ENCODE measurements at regions of chr2 and their contacts with region 1.

Region 1: DNA sequence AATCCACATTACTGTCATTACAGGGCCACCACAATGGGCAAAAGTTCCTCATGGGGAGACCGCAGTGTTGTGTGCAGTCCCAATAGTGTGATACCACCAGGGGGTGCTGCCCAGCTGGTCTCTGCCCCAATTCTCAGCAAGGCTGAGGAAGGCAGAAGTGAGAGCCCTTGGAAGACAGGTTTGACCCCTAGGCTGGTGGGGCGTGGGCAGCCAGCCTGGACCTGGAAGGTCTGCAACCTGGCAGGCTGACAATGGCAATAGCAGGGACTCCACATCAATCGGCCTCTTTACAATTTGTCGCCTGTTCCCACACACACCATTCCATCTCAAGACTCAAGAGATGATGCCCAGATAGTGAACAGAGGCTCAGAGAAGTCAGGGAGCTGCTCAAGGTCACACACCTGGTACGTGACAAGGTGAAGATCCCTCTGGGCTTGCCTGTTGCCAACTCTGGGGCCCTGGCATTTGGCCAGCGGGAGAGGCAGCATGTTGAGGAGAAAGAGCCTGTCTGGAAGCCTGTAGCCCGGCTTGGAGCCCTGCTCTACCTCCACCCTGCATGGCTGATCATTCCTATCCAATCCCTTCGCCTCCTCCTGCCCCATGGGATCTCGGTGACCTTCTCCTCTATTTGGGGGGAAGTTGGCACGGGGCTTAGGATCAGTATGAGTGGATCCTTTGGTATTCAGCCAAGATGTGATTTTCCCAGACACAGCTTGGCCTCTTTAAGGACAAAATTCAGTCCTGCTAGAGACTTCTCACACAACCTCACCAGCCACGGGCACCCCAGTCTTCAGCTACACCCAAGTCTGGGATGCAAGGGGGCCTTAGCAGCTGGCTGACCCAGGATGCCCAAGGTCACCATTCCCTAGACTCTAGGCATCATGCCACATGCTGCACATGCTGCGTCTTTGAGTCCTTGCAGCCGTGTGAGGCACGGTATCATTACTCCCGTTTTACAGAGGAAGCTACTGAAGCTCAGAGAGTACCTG is 2.9 kb upstream of the ATOH8 start:
- DNase-seq: peak; percentile 72
- ATAC-seq: peak; percentile 52
- H3K4me3 Mint-ChIP-seq: no peak overlapping the region
- H3K27ac Mint-ChIP-seq: no peak overlapping the region
- H3K4me1 Mint-ChIP-seq: peaks cover 15% of the 10 kb centered on the region
- H3K27me3 Mint-ChIP-seq: peaks cover 69% of the 10 kb centered on the region

Region 2: GRCh38 chr2:85694052-85695025 is 56.5 kb before region 1 on chr2 and contains the start of gene GNLY:
- CTCF ChIA-PET with region 1: no interaction called
- POLR2A ChIA-PET with region 1: no interaction called
- DNase-seq: no peak
- ATAC-seq: peak; percentile 23
- H3K4me3 Mint-ChIP-seq: peak within 1 kb of the TSS; percentile 50
- H3K27ac Mint-ChIP-seq: peak within 1 kb of the TSS; percentile 75
- H3K4me1 Mint-ChIP-seq: peaks cover 48% of the 10 kb centered on the region
- H3K27me3 Mint-ChIP-seq: peaks cover under 1% of the 10 kb centered on the region
- total RNA-seq, gene GNLY: 136 to 143 TPM

Region 3: DNA sequence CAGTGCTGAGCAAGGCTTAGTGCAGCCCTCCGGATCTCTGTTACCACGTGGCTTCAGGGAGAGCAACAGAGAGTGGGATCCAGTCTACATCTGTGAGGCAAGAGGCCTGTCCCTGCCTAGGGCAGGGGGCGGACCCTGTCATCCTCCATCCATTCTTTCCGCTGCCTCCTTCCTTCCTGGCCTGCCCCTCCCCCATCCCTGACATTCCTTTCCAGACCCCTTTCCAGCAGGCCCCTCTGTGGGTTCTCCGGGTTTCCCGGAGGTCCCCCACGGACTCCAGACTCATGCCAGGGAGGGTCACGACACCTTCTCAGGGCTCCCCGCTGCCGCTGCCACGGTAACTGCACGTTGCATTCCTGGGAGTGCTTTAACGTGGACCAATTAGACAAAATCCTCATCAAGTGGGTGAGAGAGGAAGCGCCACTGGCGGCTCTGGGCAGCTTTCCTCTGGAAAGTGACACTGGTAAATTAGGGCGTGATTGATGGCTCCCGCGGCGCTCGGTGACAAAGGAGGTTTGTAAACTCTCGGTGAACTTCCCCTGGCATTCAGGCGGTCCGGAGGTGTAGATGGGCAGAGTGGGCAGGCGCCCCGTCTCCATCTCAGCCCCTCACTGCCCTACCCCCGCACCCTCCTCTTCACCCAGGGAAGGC is 14.3 kb after region 1 on chr2:
- CTCF ChIA-PET with region 1: interaction called, 33 read pairs
- POLR2A ChIA-PET with region 1: no interaction called
- DNase-seq: no peak
- ATAC-seq: no peak
- H3K4me3 Mint-ChIP-seq: no peak overlapping the region
- H3K27ac Mint-ChIP-seq: no peak overlapping the region
- H3K4me1 Mint-ChIP-seq: no peaks in the 10 kb centered on the region
- H3K27me3 Mint-ChIP-seq: peaks cover 41% of the 10 kb centered on the region

Region 4: GRCh38 chr2:85772019-85772745 is 21.3 kb after region 1 on chr2:
- CTCF ChIA-PET with region 1: interaction called, 11 read pairs
- POLR2A ChIA-PET with region 1: no interaction called
- DNase-seq: no peak
- ATAC-seq: no peak
- H3K4me3 Mint-ChIP-seq: no peak overlapping the region
- H3K27ac Mint-ChIP-seq: no peak overlapping the region
- H3K4me1 Mint-ChIP-seq: peaks cover 7% of the 10 kb centered on the region
- H3K27me3 Mint-ChIP-seq: peaks cover 24% of the 10 kb centered on the region

Region 5: DNA sequence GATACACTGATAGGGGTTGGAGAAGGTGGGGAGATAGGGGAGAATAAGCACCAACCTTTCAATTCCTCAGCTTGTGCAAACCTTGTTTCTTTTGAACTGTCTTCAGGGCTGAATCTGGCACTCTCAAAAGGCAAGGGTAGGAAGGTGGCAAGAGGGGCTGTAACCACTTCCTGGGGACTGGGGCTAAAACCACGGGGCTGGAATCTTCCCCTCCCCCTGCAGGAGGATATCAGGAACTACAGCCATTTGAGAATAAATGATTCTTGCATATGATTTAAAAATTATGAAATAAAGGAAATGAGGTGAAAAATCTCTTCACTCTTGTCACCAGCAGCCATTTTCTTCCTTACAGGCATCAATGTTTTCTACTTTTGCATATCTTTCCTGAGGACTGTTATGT is 53.7 kb after region 1 on chr2:
- CTCF ChIA-PET with region 1: interaction called, 12 read pairs
- POLR2A ChIA-PET with region 1: no interaction called
- DNase-seq: peak; percentile 59
- ATAC-seq: peak; percentile 58
- H3K4me3 Mint-ChIP-seq: no peak overlapping the region
- H3K27ac Mint-ChIP-seq: no peak overlapping the region
- H3K4me1 Mint-ChIP-seq: peaks cover 18% of the 10 kb centered on the region
- H3K27me3 Mint-ChIP-seq: peaks cover 15% of the 10 kb centered on the region

Region 6: GRCh38 chr2:85813982-85814801 is 63.3 kb after region 1 on chr2:
- CTCF ChIA-PET with region 1: interaction called, 100 read pairs
- POLR2A ChIA-PET with region 1: no interaction called
- DNase-seq: peak; percentile 89
- ATAC-seq: peak; percentile 95
- H3K4me3 Mint-ChIP-seq: no peak overlapping the region
- H3K27ac Mint-ChIP-seq: no peak overlapping the region
- H3K4me1 Mint-ChIP-seq: no peaks in the 10 kb centered on the region
- H3K27me3 Mint-ChIP-seq: peaks cover 15% of the 10 kb centered on the region

Measured in activated CD8-positive, alpha-beta T cell treated with anti-CD3 and anti-CD28 coated beads, Interleukin-2, amount 10 ng/mL, durations not matched to agents 7 days and 5 days (primary cell).